B cell (primary cell): ENCODE measurements at regions of chr7 and their contacts with region 1.

Region 1: DNA sequence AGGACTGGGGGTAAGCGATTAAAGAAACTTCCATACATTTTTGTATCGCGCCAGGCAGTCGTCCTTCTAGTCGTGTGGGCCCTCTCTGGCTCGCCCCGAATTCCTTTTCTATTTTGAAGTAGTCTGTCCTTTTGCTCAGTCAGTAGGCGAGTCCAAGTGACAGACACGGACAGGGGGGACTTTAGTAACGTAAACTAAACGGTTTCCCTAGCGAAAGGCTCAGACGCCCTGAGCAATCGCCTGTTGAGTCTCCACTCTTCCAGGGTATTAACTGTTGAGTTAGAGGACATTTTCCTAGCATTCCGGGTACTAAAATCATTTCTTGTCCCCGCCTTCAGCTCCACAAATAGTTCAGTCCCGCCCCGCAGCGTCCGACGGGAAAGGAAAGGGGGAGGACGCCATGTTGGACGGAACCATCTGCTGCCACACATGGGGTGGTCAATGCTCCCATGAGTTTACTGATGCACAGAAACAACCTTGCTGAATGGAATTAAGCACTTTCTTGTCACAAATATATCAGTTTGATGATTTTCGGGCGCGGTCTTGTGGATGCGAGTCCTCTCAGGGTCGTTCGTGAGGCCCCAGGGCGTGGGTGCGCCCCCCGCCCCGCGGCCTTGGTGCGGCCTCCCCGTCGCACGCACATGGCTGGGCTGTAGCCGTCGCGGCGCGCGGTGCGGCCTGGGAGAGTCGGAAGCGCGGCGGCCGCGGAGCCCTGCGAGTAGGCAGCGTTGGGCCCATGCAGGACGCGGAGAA is at the start of gene EIF3B:
- DNase-seq: peak; percentile 99
- ATAC-seq: peak; percentile 83
- H3K4me3 ChIP-seq: peak within 1 kb of the TSS; percentile 72 to 97 (median 89)
- H3K4me3 Mint-ChIP-seq: peak within 1 kb of the TSS; percentile 94
- H3K27ac ChIP-seq: peak within 1 kb of the TSS; percentile 98 to 100
- H3K27ac Mint-ChIP-seq: peak within 1 kb of the TSS; percentile 100
- H3K4me1 ChIP-seq: peaks cover 21 to 27% of the 10 kb centered on the region in 2 donors
- H3K4me1 Mint-ChIP-seq: peaks cover 29% of the 10 kb centered on the region
- H3K27me3 ChIP-seq: no peaks in the 10 kb centered on the region
- H3K27me3 Mint-ChIP-seq: no peaks in the 10 kb centered on the region
- CTCF ChIP-seq: no peak
- total RNA-seq, gene EIF3B: 146 and 152 TPM in 2 replicates

Region 2: DNA sequence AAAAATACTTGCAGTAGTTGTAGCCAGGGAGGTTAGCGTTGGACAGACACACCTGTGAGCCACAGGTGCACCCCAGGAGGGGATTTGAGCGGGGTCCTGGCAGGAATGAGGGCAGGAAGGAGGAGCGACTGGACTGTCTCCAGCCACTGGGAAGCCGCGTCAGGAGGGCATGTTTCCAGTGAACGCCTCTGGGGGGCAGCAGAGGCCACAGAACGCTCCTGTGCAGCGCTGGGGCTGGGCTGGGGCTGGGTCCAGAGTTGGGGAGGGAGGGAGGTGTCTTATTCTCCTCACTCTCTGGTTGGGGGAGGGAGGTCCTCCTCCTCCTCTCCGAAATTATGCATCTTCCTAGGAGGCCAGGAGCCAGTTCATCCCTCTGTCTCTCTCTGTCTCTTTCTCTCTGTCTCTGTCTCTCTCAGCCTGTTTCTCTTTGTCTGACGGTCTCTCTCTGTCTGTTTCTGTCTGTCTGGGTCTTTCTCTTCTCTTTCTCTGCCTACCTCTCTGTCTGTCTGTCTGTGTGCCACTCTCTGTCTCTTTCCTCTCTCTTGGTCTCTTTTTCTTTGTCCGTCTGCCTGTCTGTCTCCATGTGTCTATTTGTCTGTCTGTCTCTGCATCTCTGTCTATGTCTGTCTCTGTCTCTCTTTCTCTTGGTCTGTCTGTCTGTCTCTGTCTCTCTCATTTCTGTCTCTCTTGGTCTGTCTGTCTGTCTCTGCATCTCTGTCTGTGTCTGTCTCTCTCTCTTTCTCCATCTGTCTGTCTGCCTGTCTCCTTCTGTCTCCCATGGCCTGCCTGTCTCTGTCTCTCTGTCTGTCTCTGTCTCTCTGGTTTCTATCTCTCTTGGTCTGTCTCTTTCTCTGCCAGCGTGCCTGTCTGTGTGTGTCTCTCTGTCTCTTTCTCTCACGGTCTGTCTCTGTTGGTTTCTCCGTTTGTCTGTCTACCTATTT is 774.6 kb before region 1 on chr7:
- CTCF ChIA-PET with region 1: interaction called, 21 read pairs
- POLR2A ChIA-PET with region 1: no interaction called
- intact Hi-C with region 1: no loop called
- DNase-seq: peak; percentile 74
- ATAC-seq: peak; percentile 99
- H3K4me3 ChIP-seq: no peak overlapping the region
- H3K4me3 Mint-ChIP-seq: no peak overlapping the region
- H3K27ac ChIP-seq: no peak overlapping the region
- H3K27ac Mint-ChIP-seq: no peak overlapping the region
- H3K4me1 ChIP-seq: peaks cover 7 to 8% of the 10 kb centered on the region in 2 donors
- H3K4me1 Mint-ChIP-seq: peaks cover 13% of the 10 kb centered on the region
- H3K27me3 ChIP-seq: no peaks in the 10 kb centered on the region
- H3K27me3 Mint-ChIP-seq: no peaks in the 10 kb centered on the region
- CTCF ChIP-seq: peak; percentile 85

Region 3: DNA sequence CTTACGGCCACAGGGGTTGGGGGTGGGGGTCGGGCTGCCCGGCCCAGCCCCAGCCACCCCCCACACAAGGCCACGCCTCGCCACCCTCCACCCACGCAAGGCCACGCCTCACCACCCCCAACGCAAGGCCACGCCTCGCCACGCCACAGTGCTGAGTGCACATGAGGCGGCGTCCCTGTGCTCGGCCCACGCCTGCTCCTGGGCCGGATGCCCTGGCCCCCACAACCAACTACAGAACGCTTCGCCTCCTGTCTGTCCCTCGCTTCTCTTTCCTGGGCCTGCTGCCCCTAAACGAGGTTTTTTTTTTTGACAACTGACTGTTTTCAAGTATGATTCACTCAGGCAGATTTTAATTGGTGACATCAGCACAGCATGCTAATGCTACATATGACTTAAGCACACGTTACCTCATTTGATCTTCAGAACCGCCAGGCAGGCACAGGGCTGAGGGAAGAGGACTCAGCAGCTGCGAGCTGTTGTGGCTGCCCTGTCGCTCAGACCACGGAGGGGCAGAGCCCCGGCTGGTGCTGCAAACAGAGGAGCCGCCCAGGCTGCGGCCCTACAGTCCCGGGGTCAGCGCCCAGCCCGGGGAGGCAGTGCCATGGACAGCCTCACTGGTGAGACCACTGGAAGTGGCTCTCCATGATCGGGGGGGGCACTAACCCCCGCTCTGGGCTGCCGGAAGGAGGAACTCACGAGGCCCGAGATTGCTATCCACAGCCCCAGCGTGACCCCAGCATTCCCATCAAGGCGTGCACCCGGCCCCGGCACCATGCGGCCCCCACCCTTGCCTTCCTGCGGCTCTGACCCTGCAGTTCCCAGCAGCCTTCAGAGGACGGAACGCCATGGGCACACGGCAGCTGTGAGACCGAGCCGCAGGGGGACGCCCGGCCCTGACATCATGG is 334.5 kb before region 1 on chr7:
- CTCF ChIA-PET with region 1: no interaction called
- POLR2A ChIA-PET with region 1: no interaction called
- intact Hi-C with region 1: loop called (anchors 1 kb)
- DNase-seq: peak; percentile 88
- ATAC-seq: peak; percentile 85
- H3K4me3 ChIP-seq: peak overlapping the region in 4 of 5 experiments; percentile 14 to 42 (median 38)
- H3K4me3 Mint-ChIP-seq: peak overlapping the region; percentile 85
- H3K27ac ChIP-seq: peak overlapping the region; percentile 81 to 93
- H3K27ac Mint-ChIP-seq: peak overlapping the region; percentile 93
- H3K4me1 ChIP-seq: peaks cover 35 to 36% of the 10 kb centered on the region in 2 donors
- H3K4me1 Mint-ChIP-seq: peaks cover 52% of the 10 kb centered on the region
- H3K27me3 ChIP-seq: no peaks in the 10 kb centered on the region
- H3K27me3 Mint-ChIP-seq: no peaks in the 10 kb centered on the region
- CTCF ChIP-seq: no peak

Region 4: GRCh38 chr7:2232766-2233520 is 121.4 kb before region 1 on chr7 and contains the start of gene MAD1L1:
- CTCF ChIA-PET with region 1: interaction called, 10 read pairs
- POLR2A ChIA-PET with region 1: interaction called, 8 read pairs
- intact Hi-C with region 1: loop called (anchors 1 kb)
- DNase-seq: peak; percentile 93
- ATAC-seq: peak; percentile 69
- H3K4me3 ChIP-seq: peak within 1 kb of the TSS; percentile 84 to 100 (median 93)
- H3K4me3 Mint-ChIP-seq: peak within 1 kb of the TSS; percentile 91
- H3K27ac ChIP-seq: peak within 1 kb of the TSS; percentile 72 to 76
- H3K27ac Mint-ChIP-seq: peak within 1 kb of the TSS; percentile 87
- H3K4me1 ChIP-seq: peaks cover 34 to 43% of the 10 kb centered on the region in 2 donors
- H3K4me1 Mint-ChIP-seq: peaks cover 51% of the 10 kb centered on the region
- H3K27me3 ChIP-seq: no peaks in the 10 kb centered on the region
- H3K27me3 Mint-ChIP-seq: no peaks in the 10 kb centered on the region
- CTCF ChIP-seq: no peak
- total RNA-seq, gene MAD1L1: 106 and 110 TPM in 2 replicates

Region 5: DNA sequence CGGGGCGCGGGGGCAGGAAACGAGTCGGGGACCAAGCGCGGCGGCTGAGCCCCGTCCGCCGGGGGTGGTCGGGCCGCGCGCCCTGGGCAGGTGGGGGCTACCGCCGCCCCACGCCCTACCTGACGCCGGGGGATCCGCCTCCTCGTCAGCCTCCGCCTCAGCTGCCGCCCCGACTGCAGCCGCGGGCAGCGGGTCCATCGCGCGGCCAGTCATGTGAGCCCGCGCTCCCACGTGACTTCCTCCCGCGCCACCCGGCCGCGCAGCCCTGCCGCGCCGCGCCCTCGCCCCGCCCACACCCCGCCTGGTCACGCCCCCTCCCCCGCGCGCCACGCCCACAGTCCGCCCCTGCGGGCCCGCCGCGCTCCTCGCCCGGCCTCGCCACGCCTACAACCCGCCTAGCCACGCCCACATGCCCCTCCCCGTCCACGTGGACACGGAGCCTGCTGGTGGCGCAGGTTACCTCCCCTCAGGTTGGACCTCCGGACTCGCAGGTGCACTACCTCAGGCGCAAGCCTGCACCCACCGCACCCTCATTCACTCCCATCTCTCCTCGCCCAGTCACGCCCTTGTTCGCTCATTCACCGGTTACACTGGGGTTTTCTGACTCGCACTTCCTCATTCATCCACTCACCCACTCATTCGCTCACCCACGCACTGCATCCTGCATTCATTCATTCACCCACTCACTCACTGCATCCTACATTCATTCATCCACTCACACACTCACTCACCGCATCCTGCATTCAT is 40.0 kb before region 1 on chr7 and contains the start of gene SNX8:
- CTCF ChIA-PET with region 1: no interaction called
- POLR2A ChIA-PET with region 1: interaction called, 6 read pairs
- intact Hi-C with region 1: loop called (anchors 1 kb)
- DNase-seq: peak; percentile 98
- ATAC-seq: peak; percentile 78
- H3K4me3 ChIP-seq: peak within 1 kb of the TSS; percentile 67 to 94 (median 81)
- H3K4me3 Mint-ChIP-seq: no peak within 1 kb of the TSS
- H3K27ac ChIP-seq: peak within 1 kb of the TSS; percentile 95 to 96
- H3K27ac Mint-ChIP-seq: peak within 1 kb of the TSS; percentile 97
- H3K4me1 ChIP-seq: peaks cover 30 to 58% of the 10 kb centered on the region in 2 donors
- H3K4me1 Mint-ChIP-seq: peaks cover 39% of the 10 kb centered on the region
- H3K27me3 ChIP-seq: no peaks in the 10 kb centered on the region
- H3K27me3 Mint-ChIP-seq: no peaks in the 10 kb centered on the region
- CTCF ChIP-seq: no peak
- total RNA-seq, gene SNX8: 126 and 144 TPM in 2 replicates

Region 6: GRCh38 chr7:2411815-2412586 is 57.6 kb after region 1 on chr7:
- CTCF ChIA-PET with region 1: no interaction called
- POLR2A ChIA-PET with region 1: no interaction called
- intact Hi-C with region 1: no loop called
- DNase-seq: no peak
- ATAC-seq: no peak
- H3K4me3 ChIP-seq: no peak overlapping the region
- H3K4me3 Mint-ChIP-seq: no peak overlapping the region
- H3K27ac ChIP-seq: no peak overlapping the region
- H3K27ac Mint-ChIP-seq: no peak overlapping the region
- H3K4me1 ChIP-seq: peaks cover 18 to 38% of the 10 kb centered on the region in 2 donors
- H3K4me1 Mint-ChIP-seq: peaks cover 46% of the 10 kb centered on the region
- H3K27me3 ChIP-seq: no peaks in the 10 kb centered on the region
- H3K27me3 Mint-ChIP-seq: no peaks in the 10 kb centered on the region
- CTCF ChIP-seq: no peak

Region 7: DNA sequence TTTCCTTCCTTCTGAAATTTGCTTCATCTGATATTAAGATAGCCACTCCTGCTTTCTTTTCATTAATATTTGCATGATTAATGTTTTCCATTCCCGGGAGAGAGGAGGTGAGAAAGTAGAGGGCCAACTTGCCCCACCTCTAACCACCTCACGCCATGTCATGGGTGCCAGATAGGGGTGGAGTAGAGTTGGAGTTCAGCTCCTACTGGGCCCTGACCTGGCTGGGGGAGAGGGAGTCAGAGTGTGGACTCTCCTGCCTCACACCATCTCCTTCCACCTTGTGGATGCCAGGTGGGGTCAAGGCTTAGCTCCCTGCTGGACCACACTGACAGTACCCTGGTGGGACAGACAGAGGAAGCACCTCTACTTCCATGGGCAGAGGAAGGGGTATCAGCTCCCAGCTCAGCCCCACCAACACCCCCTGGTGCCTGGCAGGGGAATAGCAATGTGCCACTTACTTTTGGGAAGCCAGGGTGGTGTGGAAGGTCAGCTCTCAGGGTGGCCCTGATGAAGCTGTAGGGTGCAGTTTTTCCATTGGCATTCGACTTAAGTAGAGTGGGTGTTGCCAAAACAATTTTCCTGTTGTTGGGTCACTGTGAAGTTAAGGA is 77.0 kb after region 1 on chr7:
- CTCF ChIA-PET with region 1: no interaction called
- POLR2A ChIA-PET with region 1: interaction called, 3 read pairs
- intact Hi-C with region 1: loop called (anchors 2 kb)
- DNase-seq: peak; percentile 31
- ATAC-seq: peak; percentile 41
- H3K4me3 ChIP-seq: no peak overlapping the region
- H3K4me3 Mint-ChIP-seq: no peak overlapping the region
- H3K27ac ChIP-seq: no peak overlapping the region
- H3K27ac Mint-ChIP-seq: no peak overlapping the region
- H3K4me1 ChIP-seq: no peaks in the 10 kb centered on the region
- H3K4me1 Mint-ChIP-seq: no peaks in the 10 kb centered on the region
- H3K27me3 ChIP-seq: no peaks in the 10 kb centered on the region
- H3K27me3 Mint-ChIP-seq: no peaks in the 10 kb centered on the region
- CTCF ChIP-seq: peak; percentile 50